ENCODE measurements at regions of chr2 and their contacts with region 1.

Region 1: GRCh38 chr2:7052404-7052803 is 135.2 kb downstream of the RNF144A start:
- DNase-seq: peak; percentile 92
- H3K4me3 ChIP-seq: peak overlapping the region; percentile 40
- H3K27ac ChIP-seq: peak overlapping the region; percentile 89
- H3K4me1 ChIP-seq: peaks cover 70% of the 10 kb centered on the region
- CTCF ChIP-seq: no peak

Region 2: DNA sequence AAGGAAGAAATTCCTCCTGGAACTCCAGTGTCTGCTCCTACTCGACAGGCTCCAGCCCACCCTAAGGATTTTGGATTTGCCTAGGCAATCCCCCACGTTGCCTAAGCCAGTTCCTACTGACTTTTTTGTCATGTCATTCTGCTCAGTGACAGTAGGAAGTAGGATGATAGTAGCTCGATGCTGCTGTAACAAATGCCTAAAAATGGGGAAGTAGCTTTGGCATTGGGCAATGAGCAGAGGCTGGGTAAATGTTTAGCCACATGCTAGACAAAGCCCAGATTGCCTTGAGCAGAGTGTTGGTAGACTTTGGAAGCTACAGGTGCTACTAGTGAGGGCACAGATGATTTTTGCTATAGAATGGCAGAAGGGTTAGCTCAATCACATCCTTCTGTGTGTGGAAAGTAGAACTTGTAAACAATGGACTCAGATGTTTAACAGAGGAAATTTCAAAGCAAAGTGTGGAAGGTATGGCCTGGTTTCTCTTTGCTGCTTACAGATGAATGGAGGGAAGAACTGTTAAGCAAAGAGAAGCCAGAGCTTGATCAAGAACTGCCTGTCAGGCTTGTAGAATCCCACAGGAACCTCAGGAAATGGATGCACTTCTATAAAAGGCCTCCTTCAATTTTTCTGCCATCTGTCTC is 19.6 kb after region 1 on chr2:
- CTCF ChIA-PET with region 1: interaction called, 4 read pairs
- POLR2A ChIA-PET with region 1: interaction called, 26 read pairs
- intact Hi-C with region 1: no loop called
- DNase-seq: peak; percentile 52
- H3K4me3 ChIP-seq: no peak overlapping the region
- H3K27ac ChIP-seq: no peak overlapping the region
- H3K4me1 ChIP-seq: peaks cover 19% of the 10 kb centered on the region
- CTCF ChIP-seq: no peak